GM10248 (cell line): ENCODE measurements at regions of chr18 and their contacts with region 1.

Region 1: DNA sequence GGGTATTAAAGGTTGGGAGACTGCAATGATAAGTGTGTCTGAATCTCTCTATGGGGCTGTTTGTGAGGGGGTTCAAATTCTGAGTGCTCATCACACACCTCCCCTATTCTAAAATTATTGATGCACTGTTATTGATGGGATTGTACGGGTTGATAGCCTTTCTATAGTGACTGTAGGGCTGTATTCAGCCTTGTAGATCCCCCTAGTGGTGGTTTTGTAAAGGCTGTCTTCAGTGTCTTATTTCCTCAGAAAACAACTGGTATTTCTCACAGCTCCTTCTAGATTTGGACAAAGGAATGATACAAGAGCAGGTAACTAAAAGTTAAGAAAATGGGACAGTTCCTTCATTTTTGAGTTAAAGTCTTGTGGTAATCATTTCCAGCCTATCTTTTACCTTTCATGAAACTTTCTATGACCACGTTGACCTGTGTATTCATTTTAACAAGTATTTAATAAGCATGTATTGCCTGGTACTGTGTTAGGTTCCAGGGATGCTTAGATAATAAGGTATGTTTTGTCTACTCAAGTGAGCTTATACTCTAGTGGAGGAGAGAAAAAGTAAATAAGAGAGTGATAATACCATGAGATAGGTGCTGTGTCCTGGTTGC is 21.2 kb downstream of the SMAD4 start:
- DNase-seq: peak; percentile 30
- CTCF ChIP-seq: peak; percentile 70

Region 2: DNA sequence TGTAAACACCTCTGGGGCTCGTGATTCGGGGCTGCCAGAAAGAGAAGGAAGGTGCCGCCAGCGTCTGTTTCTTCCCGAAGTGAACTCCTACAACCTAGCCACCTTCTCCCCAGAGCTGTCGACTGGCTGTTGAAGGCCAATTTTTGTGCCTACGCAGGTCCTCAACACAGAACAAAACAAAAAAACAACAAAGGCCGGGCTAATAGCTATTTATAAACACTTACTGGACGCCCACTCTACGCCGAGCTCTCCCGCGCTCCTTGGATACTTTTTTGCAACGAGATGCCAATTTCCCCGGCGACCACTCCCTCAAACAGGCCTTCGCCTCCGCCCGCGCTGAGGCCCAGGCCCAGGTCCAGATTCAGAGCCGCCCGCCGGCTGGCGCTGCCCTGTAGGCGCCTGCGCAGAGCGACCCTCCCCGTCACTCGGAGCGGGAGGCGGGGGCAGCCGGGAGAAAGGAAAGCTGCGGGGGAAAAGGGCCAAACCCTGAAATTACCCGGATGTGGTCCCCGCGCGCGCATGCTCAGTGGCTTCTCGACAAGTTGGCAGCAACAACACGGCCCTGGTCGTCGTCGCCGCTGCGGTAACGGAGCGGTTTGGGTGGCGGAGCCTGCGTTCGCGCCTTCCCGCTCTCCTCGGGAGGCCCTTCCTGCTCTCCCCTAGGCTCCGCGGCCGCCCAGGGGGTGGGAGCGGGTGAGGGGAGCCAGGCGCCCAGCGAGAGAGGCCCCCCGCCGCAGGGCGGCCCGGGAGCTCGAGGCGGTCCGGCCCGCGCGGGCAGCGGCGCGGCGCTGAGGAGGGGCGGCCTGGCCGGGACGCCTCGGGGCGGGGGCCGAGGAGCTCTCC is 21.3 kb before region 1 on chr18 and contains the start of gene SMAD4:
- CTCF ChIA-PET with region 1: interaction called, 11 read pairs
- POLR2A ChIA-PET with region 1: no interaction called
- DNase-seq: peak; percentile 97
- CTCF ChIP-seq: no peak

Region 3: GRCh38 chr18:51039138-51040112 is 11.8 kb before region 1 on chr18:
- CTCF ChIA-PET with region 1: interaction called, 52 read pairs
- POLR2A ChIA-PET with region 1: no interaction called
- DNase-seq: peak; percentile 28
- CTCF ChIP-seq: no peak

Region 4: DNA sequence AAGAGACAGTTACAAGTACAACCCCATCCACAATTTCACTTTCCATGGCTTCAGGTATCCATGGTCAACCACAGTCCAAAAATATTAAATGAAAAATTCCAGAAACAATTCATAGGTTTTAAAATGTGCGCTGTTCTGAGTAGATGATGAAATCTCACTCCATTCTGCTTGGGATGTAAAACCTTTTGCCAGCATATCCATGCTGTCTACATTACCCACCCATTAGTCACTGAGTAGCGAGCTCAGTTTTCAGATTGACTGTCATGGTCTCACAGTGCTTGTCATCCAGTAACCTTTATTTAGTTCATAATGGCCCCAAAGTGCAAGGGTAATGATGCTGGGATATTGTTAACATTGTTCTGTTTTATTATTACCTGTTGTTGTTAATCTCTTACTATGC is 19.3 kb after region 1 on chr18:
- CTCF ChIA-PET with region 1: interaction called, 42 read pairs
- POLR2A ChIA-PET with region 1: interaction called, 3 read pairs
- DNase-seq: no peak
- CTCF ChIP-seq: no peak

Region 5: GRCh38 chr18:51255693-51256092 is 204.5 kb after region 1 on chr18:
- CTCF ChIA-PET with region 1: no interaction called
- POLR2A ChIA-PET with region 1: no interaction called
- DNase-seq: no peak
- CTCF ChIP-seq: no peak

Region 6: DNA sequence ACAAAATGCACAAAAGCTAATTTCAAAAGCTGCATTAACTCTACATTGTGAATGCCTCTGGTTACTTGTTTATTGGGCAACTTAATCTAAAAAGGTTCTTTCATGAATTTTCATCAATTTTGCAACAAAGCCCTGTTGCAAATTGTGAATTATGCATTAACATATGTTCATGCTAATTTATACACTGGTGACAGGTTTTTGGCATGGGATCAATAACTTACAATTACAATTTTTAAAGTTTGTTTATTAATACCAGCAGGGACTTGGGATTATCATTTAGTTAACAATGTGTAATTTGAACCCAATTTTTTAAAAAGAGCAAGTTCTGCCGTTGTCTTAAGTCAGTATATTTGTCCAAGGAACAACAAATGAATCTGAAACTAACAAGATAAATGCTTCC is 1472.4 kb after region 1 on chr18:
- CTCF ChIA-PET with region 1: no interaction called
- POLR2A ChIA-PET with region 1: no interaction called
- DNase-seq: no peak
- CTCF ChIP-seq: no peak